ENCODE measurements at regions of chr16 and their contacts with region 1.

Region 1: GRCh38 chr16:58000706-58001676 is at the start of gene USB1:
- DNase-seq: peak; percentile 85 to 97 (median 89)
- ATAC-seq: peak; percentile 91 to 95 (median 93)
- H3K4me3 ChIP-seq: peak within 1 kb of the TSS; percentile 66 to 83 (median 73)
- H3K27ac ChIP-seq: peak within 1 kb of the TSS; percentile 78 to 83 (median 81)
- H3K4me1 ChIP-seq: peaks cover 4 to 15% (median 5%) of the 10 kb centered on the region in 3 donors
- H3K27me3 ChIP-seq: no peaks in the 10 kb centered on the region
- CTCF ChIP-seq: peak; percentile 36 to 62 (median 46)
- total RNA-seq, gene USB1: 13.5 to 23.6 (median 17.7) TPM

Region 2: DNA sequence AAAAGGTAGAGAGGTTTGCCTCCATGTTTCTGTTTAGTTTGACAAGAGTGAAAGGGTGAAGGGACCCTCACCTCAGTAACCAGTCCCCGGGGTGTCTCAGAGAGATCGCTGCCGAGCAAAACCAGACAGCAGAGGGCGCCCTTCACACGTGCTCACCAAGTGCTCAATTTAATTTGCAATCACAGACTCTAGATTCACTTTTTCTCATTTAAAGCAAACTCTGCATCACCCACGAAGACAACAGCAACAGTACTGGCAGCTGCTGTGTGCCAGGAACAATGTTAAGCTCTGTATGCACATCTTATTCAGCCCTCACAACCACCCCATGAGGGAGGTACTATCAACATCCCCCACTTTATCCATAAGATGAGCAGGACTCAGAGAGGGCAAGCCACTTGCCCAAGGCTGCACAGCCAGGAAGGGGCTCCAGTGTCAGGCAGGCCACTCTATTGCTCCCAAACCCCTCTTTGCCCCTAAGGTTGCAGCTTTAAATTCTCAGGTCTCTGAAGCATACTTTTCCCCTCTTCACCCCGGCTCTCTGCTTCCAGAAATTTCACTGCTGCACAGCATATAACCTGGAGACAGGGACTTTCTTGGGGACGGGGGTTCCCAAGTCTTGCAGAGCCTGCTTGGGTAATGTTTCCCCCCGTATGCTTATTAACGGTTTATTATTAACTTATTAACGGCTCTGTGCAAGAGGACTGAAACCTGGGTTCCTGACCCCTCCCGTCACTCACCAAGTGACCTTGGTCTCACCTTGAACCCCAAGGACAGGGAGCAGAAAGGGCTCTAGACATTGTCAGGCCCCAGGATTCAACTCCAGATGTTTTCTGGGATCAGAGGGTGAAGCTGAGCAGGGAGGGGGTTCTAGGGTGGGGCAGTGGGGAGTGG is 101.0 kb before region 1 on chr16:
- intact Hi-C with region 1: loop called in 2 of 3 experiments (anchors 2 to 5 kb)
- DNase-seq: peak in 5 of 6 donors; percentile 59 to 90 (median 75)
- ATAC-seq: peak; percentile 75 to 88 (median 85)
- H3K4me3 ChIP-seq: no peak overlapping the region
- H3K27ac ChIP-seq: no peak overlapping the region
- H3K4me1 ChIP-seq: peaks cover 0 to 1% (median 0%) of the 10 kb centered on the region in 3 donors
- H3K27me3 ChIP-seq: no peaks in the 10 kb centered on the region
- CTCF ChIP-seq: peak; percentile 52 to 78 (median 66)